ENCODE measurements at regions of chr12 and their contacts with region 1.

Region 1: DNA sequence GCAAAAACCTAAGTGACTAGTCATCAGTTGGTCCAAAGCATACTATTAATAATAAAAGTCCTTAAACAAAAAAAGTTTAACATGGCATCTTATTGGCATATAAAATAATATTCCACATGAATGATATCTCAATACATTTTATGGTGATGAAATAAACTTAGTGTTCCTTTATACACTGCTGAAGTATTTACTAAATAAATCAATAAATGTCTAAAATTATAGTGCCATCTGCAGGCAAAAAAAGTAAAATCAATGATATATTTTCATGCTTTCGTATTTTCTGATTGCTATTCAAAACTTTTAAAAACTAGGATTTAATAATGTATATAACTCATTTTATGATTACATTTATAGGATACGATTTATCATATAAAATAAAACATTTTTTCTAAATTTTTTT is 30.5 kb downstream of the PUS7L start:
- DNase-seq: no peak
- H3K4me3 ChIP-seq: no peak overlapping the region
- H3K27ac ChIP-seq: no peak overlapping the region
- H3K4me1 ChIP-seq: no peaks in the 10 kb centered on the region
- H3K27me3 ChIP-seq: no peaks in the 10 kb centered on the region
- CTCF ChIP-seq: no peak
- POLR2A ChIP-seq: no peak

Region 2: DNA sequence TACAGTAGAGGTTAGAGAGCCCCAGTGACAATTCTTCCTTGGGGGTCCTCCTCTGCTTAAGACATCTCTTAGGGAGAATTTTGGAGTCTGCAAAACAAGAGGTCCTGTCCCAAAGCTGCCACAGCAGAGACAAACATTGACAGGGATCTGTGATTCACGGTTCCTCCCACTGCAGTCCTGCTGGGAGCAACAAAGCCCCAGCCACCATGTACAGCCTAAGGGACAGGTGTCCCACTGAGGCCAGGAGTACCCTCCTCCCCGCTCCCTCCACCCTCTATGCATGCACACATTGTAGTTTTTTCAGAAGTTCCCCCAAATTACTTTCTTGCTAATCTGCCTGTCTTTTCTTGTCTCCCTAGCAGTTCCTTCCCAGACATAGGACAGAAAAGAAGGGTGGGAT is 1124.9 kb before region 1 on chr12:
- intact Hi-C with region 1: loop called (anchors 5 kb)
- DNase-seq: no peak
- H3K4me3 ChIP-seq: no peak overlapping the region
- H3K27ac ChIP-seq: no peak overlapping the region
- H3K4me1 ChIP-seq: no peaks in the 10 kb centered on the region
- H3K27me3 ChIP-seq: no peaks in the 10 kb centered on the region
- CTCF ChIP-seq: no peak
- POLR2A ChIP-seq: no peak

Region 3: DNA sequence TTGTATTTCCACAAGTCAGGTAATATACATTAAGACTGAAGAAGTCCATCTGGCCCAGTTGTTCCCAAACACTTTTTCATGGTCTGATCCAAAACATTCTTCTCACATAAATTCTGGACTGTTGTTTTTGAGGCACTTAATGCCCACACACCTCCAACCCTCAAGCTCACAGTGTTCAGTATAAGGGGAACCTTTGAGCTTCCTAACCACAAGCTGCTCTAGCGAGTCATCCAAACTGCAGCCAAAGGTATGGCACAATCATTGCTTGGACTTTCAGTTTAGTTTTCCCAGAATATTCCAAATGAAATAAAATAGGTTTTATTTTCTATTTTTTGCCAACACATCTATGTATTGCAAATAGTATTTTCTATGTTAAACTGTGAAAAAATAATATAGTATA is 72.5 kb before region 1 on chr12:
- intact Hi-C with region 1: no loop called
- DNase-seq: no peak
- H3K4me3 ChIP-seq: no peak overlapping the region
- H3K27ac ChIP-seq: no peak overlapping the region
- H3K4me1 ChIP-seq: no peaks in the 10 kb centered on the region
- H3K27me3 ChIP-seq: no peaks in the 10 kb centered on the region
- CTCF ChIP-seq: no peak
- POLR2A ChIP-seq: no peak

Region 4: DNA sequence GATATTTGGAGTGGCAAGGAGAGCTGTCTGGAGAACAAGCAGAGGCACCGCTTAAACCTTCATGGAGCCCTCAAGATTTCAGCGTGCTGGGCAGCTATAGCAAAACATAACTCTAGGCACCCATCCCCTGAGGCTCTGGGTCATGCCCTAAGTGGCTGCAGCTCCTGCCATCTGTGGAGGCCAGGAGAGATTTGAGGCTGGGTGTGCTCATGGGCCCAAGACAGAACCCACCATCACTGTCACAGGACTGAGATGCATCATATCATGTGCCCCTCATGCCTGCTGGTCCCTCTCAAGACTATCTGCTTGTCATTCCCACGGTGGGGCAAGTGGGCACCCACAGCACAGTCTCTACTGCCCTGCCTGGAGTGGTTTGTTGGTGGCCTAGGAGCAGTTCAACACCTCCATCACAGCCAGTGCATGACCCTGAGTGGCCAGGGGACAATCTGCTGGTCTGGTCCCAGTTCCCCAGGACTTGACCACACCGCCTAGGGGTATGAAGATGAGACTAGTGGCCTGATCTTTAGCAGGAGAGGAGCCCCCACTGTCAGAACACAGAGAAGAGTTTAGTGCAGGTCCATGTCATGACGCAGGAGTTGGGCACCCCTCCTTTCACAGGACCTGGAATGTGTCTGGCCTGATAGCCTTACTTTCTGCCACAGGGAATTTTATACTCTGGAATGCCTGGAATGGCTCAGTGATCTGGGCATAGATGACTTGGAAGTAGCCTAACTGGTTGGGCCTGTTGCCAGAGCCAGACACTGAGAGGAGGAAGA is 53.1 kb before region 1 on chr12:
- intact Hi-C with region 1: loop called (anchors 2 kb)
- DNase-seq: no peak
- H3K4me3 ChIP-seq: no peak overlapping the region
- H3K27ac ChIP-seq: no peak overlapping the region
- H3K4me1 ChIP-seq: no peaks in the 10 kb centered on the region
- H3K27me3 ChIP-seq: no peaks in the 10 kb centered on the region
- CTCF ChIP-seq: no peak
- POLR2A ChIP-seq: no peak

Region 5: DNA sequence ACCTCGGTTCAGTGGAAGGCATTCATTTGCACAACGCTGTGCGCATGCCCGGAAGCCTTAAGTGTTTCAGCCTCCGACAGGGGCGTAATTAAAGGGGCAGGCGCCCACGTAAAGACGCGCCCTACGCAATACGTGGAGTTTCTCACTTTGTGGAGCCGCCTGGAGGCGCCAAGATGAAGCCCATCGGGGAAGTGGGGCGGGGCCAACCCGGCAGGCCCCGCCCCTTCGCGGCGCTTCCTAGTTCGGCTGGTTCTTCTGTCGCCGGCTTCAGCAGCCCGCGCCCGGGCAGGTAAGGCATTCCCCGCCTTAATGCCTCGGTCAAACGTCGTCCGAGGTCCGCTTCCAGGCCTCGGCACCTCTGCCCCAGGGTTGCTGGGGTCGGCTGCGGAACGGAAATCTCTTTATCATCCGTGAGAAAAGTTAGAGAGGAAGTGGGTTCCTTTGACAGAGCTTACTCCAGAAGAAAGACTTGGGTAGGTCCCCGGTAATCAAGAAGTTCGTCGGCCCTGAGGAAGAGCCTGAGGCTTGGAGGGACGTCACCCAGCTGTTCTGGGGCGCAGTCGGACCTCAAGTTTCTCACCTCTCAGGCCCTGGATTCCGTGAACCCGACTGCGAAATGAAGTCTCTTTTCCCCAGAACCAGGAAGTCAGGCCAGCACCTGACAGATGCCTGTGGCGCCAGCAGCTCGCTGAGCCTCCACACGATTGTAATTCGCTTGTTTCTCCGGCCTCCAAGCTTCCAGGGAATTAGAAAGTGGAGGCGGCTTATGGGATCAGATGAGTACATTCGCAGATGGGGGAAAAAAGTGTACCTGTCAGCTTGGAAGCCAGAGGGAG is 30.8 kb after region 1 on chr12 and contains the starts of genes IRAK4 and PUS7L:
- intact Hi-C with region 1: no loop called
- DNase-seq: peak; percentile 92 to 95
- H3K4me3 ChIP-seq: peak within 1 kb of the TSS; percentile 65 to 82 (median 73)
- H3K27ac ChIP-seq: peak within 1 kb of the TSS; percentile 88 to 95
- H3K4me1 ChIP-seq: peaks cover 0 to 16% of the 10 kb centered on the region in 2 donors
- H3K27me3 ChIP-seq: no peaks in the 10 kb centered on the region
- CTCF ChIP-seq: peak in 2 of 3 donors; percentile 32 to 49
- POLR2A ChIP-seq: peak; percentile 75
- total RNA-seq, gene IRAK4: 37.4 to 46.4 (median 38.7) TPM
- total RNA-seq, gene PUS7L: 7.8 to 13.6 (median 9.2) TPM

Region 6: DNA sequence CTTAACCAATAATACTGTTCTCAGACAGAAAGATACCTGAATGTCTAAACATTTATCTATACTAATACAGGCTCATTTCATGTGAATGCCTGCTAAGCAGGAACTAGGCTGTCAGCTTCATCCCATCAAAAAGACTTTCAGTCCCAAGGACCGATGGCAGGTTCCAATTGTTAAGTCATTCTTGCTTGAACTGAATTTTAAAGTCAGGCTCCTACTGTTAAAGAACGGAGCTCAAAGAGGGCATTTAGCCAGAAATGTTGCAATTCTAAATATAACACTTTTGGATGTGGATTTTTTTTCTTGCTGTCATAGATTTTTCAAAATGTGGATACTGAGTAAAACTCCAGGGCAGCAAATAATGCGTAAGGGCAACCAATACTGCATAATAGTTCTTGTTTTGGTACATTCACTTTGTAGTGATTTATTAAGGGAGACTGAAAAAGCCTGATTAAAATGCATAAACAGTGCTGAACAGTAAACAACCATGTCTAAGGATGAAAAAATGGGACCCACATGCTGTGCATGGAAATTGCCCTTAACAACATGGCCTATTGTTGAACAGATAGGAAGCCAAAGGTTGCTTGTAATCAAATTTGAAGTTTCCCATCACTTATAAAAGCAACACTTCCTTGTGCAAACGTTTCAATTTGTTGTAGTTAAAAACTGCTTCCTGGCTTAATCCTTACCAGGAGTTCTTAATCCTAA is 1361.4 kb after region 1 on chr12:
- intact Hi-C with region 1: no loop called
- DNase-seq: no peak
- H3K4me3 ChIP-seq: no peak overlapping the region
- H3K27ac ChIP-seq: no peak overlapping the region
- H3K4me1 ChIP-seq: no peaks in the 10 kb centered on the region
- H3K27me3 ChIP-seq: no peaks in the 10 kb centered on the region
- CTCF ChIP-seq: no peak
- POLR2A ChIP-seq: no peak